Activated CD8-positive, alpha-beta memory T cell treated with anti-CD3 and anti-CD28 coated beads, Interleukin-2, amount 10 ng/mL, durations not matched to agents 7 days and 5 days (primary cell): ENCODE measurements at regions of chr14 and their contacts with region 1.

Region 1: GRCh38 chr14:95683793-95684192 is 2.4 kb upstream of the TCL1B start:
- DNase-seq: peak; percentile 46
- ATAC-seq: peak; percentile 27
- H3K4me3 Mint-ChIP-seq: no peak overlapping the region
- H3K27ac Mint-ChIP-seq: no peak overlapping the region
- H3K4me1 Mint-ChIP-seq: no peaks in the 10 kb centered on the region
- H3K27me3 Mint-ChIP-seq: peaks cover 9% of the 10 kb centered on the region

Region 2: DNA sequence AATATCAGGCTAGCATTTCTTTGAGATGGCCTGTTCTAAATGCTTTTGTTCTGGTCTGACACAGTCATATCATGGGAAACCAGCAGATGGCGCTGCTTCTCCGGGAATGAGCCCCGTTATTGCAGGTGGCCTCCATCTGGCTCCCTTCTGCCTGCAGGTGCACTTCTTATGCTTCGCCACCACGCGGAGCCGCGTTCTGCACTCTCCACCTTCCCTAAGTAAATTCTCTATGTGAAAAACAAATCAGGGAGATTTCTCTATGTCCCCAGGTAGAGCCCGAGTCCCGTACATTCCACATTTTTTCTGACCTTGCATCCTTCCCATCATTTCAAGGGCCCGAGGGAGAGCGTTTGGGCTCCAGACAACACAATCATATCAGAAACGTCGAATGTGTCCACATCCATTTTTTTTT is 122.8 kb before region 1 on chr14:
- CTCF ChIA-PET with region 1: interaction called, 13 read pairs
- DNase-seq: peak; percentile 89
- ATAC-seq: peak; percentile 98
- H3K4me3 Mint-ChIP-seq: no peak overlapping the region
- H3K27ac Mint-ChIP-seq: no peak overlapping the region
- H3K4me1 Mint-ChIP-seq: peaks cover 3% of the 10 kb centered on the region
- H3K27me3 Mint-ChIP-seq: peaks cover 7% of the 10 kb centered on the region